Activated CD8-positive, alpha-beta T cell treated with anti-CD3 and anti-CD28 coated beads for 36 hours (primary cell): ENCODE measurements at regions of chr6 and their contacts with region 1.

Region 1: GRCh38 chr6:134097114-134097707 is 44.8 kb upstream of the SLC2A12 start:
- DNase-seq: peak; percentile 72
- ATAC-seq: peak; percentile 49
- H3K4me3 Mint-ChIP-seq: no peak overlapping the region
- H3K27ac Mint-ChIP-seq: no peak overlapping the region
- H3K4me1 Mint-ChIP-seq: no peaks in the 10 kb centered on the region
- H3K27me3 Mint-ChIP-seq: peaks cover 14% of the 10 kb centered on the region
- CTCF ChIP-seq: peak; percentile 67

Region 2: DNA sequence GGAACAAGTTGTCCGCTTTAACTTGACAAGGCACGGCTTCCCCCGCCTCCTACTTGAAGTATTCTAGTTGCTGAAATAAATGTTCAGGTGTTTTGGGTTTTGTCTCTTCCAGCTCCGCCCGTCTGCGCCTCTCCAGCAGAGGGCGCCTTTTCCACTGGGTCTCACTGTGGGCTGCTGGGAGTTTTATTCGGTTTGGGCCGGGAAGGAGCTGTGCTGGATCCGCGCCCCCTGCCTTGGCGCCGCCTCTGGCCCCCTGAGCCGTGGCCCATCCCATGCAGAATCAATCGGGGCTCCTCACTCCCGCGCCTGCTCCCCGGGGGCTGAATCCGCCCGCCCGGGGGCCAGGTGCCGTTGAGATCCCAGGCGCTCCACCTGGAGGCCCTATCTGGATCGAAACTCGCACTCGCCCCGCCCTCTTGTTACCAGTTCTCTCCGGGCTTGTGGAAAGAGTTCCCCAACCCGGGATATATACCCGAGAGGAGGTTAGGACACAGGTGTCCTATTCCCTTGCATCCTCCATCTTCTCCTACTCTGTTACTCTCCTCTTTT is 259.3 kb before region 1 on chr6:
- CTCF ChIA-PET with region 1: interaction called, 11 read pairs
- POLR2A ChIA-PET with region 1: no interaction called
- intact Hi-C with region 1: no loop called
- DNase-seq: peak; percentile 71
- ATAC-seq: peak; percentile 83
- H3K4me3 Mint-ChIP-seq: peak overlapping the region; percentile 61
- H3K27ac Mint-ChIP-seq: no peak overlapping the region
- H3K4me1 Mint-ChIP-seq: peaks cover 6% of the 10 kb centered on the region
- H3K27me3 Mint-ChIP-seq: peaks cover 24% of the 10 kb centered on the region
- CTCF ChIP-seq: peak; percentile 88

Region 3: DNA sequence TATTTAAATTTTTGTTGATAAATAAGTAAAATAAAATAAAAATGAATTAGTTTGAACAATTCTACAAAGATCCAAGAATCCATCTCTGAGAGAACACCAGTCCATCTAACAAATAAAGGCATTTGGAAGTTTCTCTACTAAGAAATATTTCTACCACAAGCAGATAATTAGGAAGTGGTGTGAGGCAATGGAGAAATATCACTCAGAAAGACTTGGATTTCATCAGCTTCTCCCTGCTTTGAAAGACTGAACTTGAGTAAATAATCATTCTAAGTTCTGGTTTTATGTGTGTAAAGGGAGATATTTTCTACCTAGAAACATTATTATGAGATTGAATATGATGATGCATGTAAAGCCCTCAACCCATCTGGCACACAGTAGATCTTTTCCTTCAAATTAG is 226.1 kb before region 1 on chr6:
- CTCF ChIA-PET with region 1: no interaction called
- POLR2A ChIA-PET with region 1: no interaction called
- intact Hi-C with region 1: no loop called
- DNase-seq: no peak
- ATAC-seq: no peak
- H3K4me3 Mint-ChIP-seq: no peak overlapping the region
- H3K27ac Mint-ChIP-seq: no peak overlapping the region
- H3K4me1 Mint-ChIP-seq: no peaks in the 10 kb centered on the region
- H3K27me3 Mint-ChIP-seq: peaks cover 17% of the 10 kb centered on the region
- CTCF ChIP-seq: no peak

Region 4: DNA sequence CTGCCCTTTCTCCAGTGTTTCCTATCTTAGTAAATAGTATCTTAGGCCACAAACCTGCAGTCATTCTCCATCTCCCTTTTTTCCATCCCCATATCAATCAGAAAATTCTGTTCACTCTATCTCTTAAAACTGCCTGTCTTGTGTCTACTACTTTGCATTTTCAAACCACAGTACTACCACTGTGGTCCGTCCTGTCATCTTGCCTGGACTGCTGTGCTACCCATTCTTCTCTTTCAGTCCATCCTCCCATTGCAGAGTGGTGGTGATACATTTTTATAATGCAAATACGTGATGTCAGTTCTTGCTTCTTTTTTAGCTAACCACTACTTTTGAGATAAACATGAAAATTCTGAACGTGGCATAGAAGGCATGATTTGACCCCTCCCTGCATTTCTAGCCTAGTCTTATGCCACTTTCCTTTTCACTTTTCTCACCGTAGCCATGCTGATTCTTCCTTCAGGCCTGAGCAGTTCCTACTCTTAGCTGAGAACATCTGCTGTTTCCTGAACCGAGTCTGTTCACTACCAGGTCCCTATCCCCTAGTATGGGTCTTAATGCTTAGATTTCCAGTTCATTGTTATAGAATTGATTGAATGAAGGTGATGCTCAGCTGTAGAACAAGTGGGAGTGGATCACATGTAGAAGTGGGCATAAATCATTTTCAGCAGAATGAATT is 130.4 kb before region 1 on chr6:
- CTCF ChIA-PET with region 1: interaction called, 12 read pairs
- POLR2A ChIA-PET with region 1: no interaction called
- intact Hi-C with region 1: no loop called
- DNase-seq: no peak
- ATAC-seq: no peak
- H3K4me3 Mint-ChIP-seq: no peak overlapping the region
- H3K27ac Mint-ChIP-seq: no peak overlapping the region
- H3K4me1 Mint-ChIP-seq: peaks cover 57% of the 10 kb centered on the region
- H3K27me3 Mint-ChIP-seq: no peaks in the 10 kb centered on the region
- CTCF ChIP-seq: no peak

Region 5: GRCh38 chr6:133991096-133991593 is 106.1 kb before region 1 on chr6:
- CTCF ChIA-PET with region 1: interaction called, 17 read pairs
- POLR2A ChIA-PET with region 1: no interaction called
- intact Hi-C with region 1: no loop called
- DNase-seq: no peak
- ATAC-seq: no peak
- H3K4me3 Mint-ChIP-seq: no peak overlapping the region
- H3K27ac Mint-ChIP-seq: no peak overlapping the region
- H3K4me1 Mint-ChIP-seq: peaks cover 7% of the 10 kb centered on the region
- H3K27me3 Mint-ChIP-seq: no peaks in the 10 kb centered on the region
- CTCF ChIP-seq: no peak

Region 6: DNA sequence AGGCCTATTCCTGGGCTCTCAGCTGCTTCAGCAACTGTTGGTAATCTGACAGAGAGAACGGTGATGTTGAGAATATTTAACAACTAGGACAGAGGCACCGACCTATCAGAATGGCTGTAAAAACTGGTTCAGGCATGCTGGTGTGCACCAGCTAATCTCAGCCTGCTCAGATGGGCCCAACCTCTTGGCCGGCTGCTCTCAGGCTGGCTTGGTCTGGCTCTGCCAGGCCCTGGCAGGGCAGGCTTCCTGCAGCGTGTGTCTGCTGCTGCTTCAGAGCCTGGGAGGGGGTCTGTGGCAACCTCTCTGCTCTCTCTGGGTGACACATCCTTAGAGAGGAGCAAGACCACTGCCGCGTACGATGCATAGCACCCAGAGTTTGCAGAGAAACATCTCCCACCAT is 49.5 kb before region 1 on chr6:
- CTCF ChIA-PET with region 1: interaction called, 13 read pairs
- POLR2A ChIA-PET with region 1: no interaction called
- intact Hi-C with region 1: no loop called
- DNase-seq: no peak
- ATAC-seq: no peak
- H3K4me3 Mint-ChIP-seq: no peak overlapping the region
- H3K27ac Mint-ChIP-seq: no peak overlapping the region
- H3K4me1 Mint-ChIP-seq: peaks cover 6% of the 10 kb centered on the region
- H3K27me3 Mint-ChIP-seq: peaks cover 5% of the 10 kb centered on the region
- CTCF ChIP-seq: no peak

Region 7: GRCh38 chr6:134080171-134080795 is 16.9 kb before region 1 on chr6:
- CTCF ChIA-PET with region 1: interaction called, 33 read pairs
- POLR2A ChIA-PET with region 1: no interaction called
- intact Hi-C with region 1: no loop called
- DNase-seq: peak; percentile 3
- ATAC-seq: no peak
- H3K4me3 Mint-ChIP-seq: no peak overlapping the region
- H3K27ac Mint-ChIP-seq: no peak overlapping the region
- H3K4me1 Mint-ChIP-seq: peaks cover 13% of the 10 kb centered on the region
- H3K27me3 Mint-ChIP-seq: no peaks in the 10 kb centered on the region
- CTCF ChIP-seq: no peak

Region 8: DNA sequence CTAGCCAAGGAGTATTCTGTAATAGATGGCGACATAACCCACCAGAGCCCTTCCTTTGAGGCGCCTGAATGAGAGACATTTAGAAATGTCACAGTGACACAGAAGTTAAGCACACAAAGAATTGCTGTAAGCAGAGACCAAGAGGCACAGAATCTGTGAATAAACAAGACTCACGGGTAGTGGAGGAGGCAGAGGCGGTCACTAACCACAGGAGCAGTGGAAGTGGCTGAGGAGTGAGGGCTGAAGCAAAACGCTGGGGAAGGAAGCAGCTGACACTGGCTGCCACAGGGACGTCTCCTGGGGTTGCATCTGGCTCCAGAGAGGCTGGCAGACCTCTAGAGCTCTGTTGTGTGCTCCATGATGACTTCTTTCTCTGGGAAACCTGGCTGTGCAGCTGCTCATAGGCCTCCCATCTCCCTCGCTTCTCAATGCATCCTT is 20.2 kb after region 1 on chr6:
- CTCF ChIA-PET with region 1: interaction called, 33 read pairs
- POLR2A ChIA-PET with region 1: no interaction called
- intact Hi-C with region 1: no loop called
- DNase-seq: peak; percentile 24
- ATAC-seq: peak; percentile 37
- H3K4me3 Mint-ChIP-seq: no peak overlapping the region
- H3K27ac Mint-ChIP-seq: no peak overlapping the region
- H3K4me1 Mint-ChIP-seq: peaks cover 4% of the 10 kb centered on the region
- H3K27me3 Mint-ChIP-seq: peaks cover 6% of the 10 kb centered on the region
- CTCF ChIP-seq: no peak

Region 9: DNA sequence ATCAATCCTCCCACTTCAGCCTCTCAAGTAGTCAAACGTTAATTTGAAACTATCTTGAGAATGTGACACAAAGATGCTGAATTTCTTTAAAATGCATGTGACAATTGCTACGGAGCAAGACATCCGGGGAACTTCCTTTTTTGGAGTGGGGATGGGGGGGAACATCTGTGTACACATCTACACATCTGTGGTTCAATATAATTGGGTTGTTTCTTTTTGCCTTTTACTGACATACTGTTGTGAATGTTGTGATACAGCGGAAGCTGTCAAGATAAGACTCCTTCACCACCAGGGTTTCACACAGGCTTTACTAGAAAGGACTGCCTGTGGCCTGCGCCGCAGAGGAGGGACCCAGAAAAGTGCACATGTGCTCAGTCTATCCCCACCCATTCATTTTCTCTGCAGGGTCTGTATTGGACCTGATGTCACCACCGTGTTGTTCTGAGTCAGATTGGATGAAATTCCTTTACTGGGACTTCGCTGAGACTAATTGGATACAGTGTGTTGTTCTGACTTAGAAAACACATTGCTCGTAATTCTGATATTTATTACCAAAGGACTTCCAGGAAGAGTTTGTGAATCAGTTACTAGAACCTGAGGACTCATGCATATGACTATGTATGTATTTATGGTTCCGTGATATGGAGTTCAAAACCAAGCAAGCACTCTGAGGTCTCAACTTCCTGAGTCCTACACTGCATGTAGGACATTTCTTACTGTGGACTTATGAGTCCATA is 319.4 kb after region 1 on chr6:
- CTCF ChIA-PET with region 1: no interaction called
- POLR2A ChIA-PET with region 1: no interaction called
- intact Hi-C with region 1: no loop called
- DNase-seq: no peak
- ATAC-seq: peak; percentile 66
- H3K4me3 Mint-ChIP-seq: no peak overlapping the region
- H3K27ac Mint-ChIP-seq: peak overlapping the region; percentile 43
- H3K4me1 Mint-ChIP-seq: peaks cover 8% of the 10 kb centered on the region
- H3K27me3 Mint-ChIP-seq: no peaks in the 10 kb centered on the region
- CTCF ChIP-seq: no peak